ENCODE measurements at regions of chr17 and their contacts with region 1.

Region 1: DNA sequence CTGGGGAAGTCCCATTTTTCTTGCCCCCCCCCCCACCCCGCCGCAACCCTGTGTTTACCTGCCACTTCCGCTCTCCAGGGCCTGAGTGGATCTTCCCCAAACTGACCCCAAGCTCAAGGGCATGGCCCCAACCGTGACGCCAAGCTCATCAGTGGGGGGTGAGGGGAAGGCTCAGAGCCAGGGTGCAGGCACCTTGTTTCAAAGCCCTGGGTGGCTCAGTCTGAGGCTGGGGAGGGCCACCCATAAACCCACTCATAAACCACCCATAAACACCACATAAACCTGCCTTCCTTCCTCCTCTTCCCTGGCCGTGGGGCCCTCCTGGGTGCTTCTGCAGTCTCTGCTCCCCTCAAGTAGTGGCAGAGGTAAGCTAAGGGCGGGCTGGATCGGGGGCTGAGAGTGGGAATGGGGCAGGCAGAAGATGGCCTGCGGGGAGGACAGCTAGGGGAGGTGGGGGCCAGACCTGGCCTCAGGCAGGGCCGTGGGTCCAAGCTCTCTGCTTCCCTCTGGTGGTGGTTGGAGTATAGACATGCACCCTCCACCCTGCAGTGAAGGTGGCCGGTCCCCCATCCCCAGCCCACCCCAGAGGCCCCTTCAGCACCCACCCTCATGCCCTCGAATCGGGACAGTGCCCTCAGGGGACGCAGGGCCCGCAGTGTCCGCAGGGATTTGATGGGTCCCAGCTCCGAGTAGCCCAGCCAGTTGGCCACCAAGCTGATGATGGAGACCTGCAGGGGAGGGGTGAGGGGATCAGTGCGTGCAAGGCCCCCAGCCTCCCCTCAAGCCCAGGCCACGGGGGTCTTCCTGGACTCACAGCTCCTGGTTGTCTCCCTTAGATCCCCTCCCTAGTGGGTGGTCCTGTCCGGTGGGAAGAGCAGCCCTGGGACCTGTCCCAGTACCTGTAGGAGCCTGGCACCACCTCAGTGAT is 14.6 kb upstream of the CD79B start:
- DNase-seq: no peak
- H3K4me3 ChIP-seq: no peak overlapping the region
- H3K27me3 ChIP-seq: peaks cover 1% of the 10 kb centered on the region; the same call in 1 of the 2 replicates
- CTCF ChIP-seq: peak; percentile 82

Region 2: DNA sequence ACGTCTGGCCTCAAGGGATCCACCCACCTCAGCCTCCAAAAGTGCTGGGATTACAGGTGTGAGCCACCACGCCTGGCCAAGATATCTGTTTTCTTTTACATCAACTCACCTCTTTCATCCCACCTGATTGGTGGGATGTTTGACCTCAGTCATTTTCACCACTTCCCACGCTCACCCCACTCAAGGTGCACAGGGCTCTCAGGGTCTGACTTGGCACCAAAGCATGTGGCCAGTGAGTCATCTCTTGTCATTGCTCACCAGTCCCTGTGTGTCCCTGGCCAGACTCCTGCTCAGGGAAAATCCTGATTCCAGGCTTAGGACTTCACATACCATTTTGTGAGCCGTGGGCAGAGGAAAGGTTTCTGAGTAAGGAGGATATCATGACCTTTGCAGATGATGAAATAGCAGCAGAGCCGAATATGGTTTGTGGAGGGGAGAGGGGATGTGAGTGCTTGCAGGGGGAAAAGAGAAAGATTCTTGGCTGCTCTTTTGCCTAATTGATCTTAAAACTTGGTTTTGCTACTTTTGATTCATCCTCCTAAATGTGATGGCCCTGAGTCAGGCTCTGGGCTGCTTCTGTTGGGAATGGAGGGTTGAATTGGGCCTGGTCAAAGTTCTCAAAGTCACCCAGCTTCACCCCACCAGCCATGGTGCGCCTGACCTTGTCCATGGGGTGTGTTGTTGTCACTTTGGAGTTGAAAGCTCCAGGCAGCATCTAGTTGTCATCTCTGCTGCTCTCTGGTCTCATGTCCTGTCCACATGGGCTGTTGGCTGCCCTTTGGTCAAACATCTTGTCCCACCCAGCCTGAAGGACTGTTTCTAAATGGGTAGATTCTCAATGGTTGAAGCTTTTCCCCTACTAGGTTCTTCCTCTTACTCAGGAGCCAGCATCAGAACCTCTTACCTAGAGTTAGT is 429.5 kb before region 1 on chr17:
- CTCF ChIA-PET with region 1: no interaction called
- POLR2A ChIA-PET with region 1: no interaction called
- DNase-seq: peak; percentile 22
- H3K4me3 ChIP-seq: no peak overlapping the region
- H3K27me3 ChIP-seq: peaks cover 2% of the 10 kb centered on the region; the same call in 1 of the 2 replicates
- CTCF ChIP-seq: no peak

Region 3: GRCh38 chr17:63911657-63912426 is 34.9 kb before region 1 on chr17:
- CTCF ChIA-PET with region 1: interaction called, 21 read pairs
- POLR2A ChIA-PET with region 1: no interaction called
- DNase-seq: no peak
- H3K4me3 ChIP-seq: no peak overlapping the region
- H3K27me3 ChIP-seq: peaks cover 10% of the 10 kb centered on the region
- CTCF ChIP-seq: peak; percentile 72

Region 4: DNA sequence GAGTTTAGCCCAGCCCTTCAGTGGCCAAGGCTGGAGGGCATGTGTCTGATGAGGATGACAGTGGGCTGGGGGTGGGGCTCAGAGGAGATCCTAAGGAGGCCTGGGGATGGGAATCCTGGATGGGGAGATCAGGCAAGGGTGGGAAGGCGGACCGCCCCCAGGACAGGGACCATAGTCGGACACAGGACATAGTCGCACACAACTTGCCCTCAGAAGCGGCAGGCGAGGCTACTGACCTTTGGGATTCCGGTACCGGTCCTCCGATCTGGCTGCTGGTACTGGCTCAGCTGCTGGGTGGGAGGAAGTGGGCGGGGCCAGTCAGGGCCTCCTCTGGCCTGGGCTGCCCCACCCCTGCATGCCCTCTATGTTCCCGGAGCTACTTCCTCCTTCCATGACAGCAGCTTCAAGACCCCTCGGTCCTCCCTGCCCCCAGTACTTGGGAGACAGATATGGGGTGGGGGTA is 15.6 kb before region 1 on chr17:
- CTCF ChIA-PET with region 1: interaction called, 19 read pairs
- POLR2A ChIA-PET with region 1: interaction called, 3 read pairs
- DNase-seq: no peak
- H3K4me3 ChIP-seq: no peak overlapping the region
- H3K27me3 ChIP-seq: peaks cover 10% of the 10 kb centered on the region
- CTCF ChIP-seq: no peak

Region 5: DNA sequence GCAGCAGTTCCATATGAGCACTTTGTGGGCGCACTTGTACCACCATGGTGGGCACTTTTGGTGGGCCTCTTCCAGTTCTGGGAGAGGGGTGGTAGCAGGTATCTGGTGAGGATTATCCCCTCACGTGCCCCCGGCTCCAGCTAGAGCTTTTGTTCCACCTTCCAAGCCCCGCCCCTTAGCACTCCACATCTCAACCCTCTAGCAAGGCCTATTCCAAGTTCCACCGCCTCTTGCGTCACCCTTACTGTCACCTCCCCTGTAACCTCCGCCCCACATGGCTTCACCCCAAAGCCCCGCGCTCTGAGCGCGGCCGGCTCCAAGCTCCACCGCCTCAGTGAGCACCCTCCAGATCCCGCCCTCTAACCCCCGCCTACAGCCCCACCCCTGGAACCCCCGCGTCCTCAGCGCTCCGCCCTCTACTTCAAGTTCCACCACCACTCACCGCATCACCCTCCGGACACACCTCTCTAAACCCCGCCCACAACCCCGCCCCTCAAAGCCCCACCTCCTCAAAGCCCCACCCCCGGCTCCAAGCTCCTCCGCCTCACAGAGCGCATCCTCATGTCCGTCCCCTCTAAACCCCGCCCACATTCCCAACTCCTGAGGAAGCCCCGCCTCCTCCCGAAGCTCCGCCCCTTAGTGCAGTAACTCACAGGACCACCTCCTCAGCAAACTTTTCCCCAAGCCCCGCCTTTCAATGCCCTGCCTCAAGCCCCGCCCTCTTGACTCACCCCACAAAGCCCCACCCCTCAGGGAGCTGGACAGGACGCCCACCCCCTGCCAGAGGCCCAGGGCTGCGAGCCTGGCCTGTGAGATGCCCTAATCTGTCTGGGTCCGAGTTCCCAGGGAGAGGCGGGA is 14.9 kb after region 1 on chr17:
- CTCF ChIA-PET with region 1: interaction called, 28 read pairs
- POLR2A ChIA-PET with region 1: no interaction called
- DNase-seq: no peak
- H3K4me3 ChIP-seq: no peak overlapping the region
- H3K27me3 ChIP-seq: no peaks in the 10 kb centered on the region; the same call in none of the 2 replicates
- CTCF ChIP-seq: no peak

Region 6: DNA sequence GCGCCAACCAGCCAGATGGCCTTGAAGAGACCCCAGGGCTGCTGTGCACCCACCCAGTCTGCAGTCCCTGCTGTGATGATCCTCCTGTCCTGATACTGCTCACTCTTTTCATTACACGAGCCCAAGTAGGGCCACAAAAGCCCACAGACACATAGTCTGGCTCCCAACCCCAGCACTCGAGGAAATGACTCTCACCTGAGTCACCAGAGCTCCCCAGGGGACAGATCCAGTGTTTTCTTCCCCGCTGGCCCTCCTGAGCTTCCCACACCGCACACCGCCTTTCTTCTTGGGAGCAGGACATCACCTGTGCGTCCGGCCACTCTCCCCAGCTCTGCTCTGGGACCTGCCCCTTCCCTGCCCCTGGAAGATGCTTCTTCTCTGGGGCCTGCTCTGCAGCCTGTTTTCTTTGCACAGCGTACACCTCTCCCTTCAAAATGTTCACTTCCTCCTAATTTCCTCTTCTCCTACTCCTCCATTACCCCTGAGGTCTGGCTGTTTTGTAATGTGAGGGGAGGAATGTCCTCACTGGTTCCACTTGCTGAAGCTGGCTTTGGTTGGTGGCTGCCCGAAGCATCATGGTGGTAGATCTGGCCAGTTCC is 28.0 kb after region 1 on chr17:
- CTCF ChIA-PET with region 1: interaction called, 14 read pairs
- POLR2A ChIA-PET with region 1: no interaction called
- DNase-seq: no peak
- H3K4me3 ChIP-seq: no peak overlapping the region
- H3K27me3 ChIP-seq: no peaks in the 10 kb centered on the region
- CTCF ChIP-seq: no peak

Region 7: GRCh38 chr17:63984651-63985386 is 38.1 kb after region 1 on chr17:
- CTCF ChIA-PET with region 1: interaction called, 22 read pairs
- POLR2A ChIA-PET with region 1: no interaction called
- DNase-seq: peak; percentile 54
- H3K4me3 ChIP-seq: no peak overlapping the region
- H3K27me3 ChIP-seq: peaks cover 4% of the 10 kb centered on the region
- CTCF ChIP-seq: no peak

Measured in BJ (cell line).